ENCODE measurements at regions of chr3 and their contacts with region 1.

Region 1: GRCh38 chr3:66483406-66483906 is 17.4 kb downstream of the LRIG1 start:
- DNase-seq: peak in 37 of 42 donors; percentile 11 to 74 (median 41)

Region 2: DNA sequence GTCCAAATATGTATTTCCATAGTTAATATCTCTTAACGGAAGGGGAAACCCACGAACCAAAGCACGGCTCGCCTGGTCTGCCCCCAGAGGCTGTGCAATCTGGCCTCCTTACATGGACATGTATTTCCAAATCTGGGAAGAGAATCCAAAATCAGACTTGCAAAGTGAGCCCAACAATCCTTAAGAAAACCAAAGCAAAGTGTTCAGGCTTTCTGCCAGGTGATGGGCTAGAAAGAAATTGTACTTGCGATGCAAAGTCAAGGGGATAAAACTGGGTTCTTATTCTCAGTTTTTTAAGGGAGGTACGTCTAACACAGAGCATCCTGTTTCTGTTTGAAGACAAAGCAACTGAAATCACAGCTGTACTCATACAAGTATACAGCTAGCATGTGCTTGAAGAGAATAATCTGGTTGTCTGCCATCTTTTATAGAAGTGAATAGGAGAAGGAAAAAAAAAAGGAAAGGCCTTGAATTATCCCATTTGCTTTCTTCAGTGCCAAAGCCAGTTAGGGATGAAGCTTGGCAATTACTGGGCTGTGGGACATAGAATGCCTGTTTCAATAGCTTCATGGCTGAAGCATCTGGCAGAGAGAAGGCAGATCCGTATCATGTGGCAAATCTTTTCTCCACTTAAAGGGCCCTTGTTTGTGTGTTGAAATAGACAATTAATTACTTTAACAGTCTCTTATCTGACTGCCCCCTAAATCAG is 31.0 kb before region 1 on chr3:
- intact Hi-C with region 1: loop called (anchors 2 kb)
- DNase-seq: peak in 14 of 42 donors; percentile 31 to 79 (median 52)